Cardiac septum (tissue), 1 donor: ENCODE measurements at regions of chr1 and their contacts with region 1.

Region 1: DNA sequence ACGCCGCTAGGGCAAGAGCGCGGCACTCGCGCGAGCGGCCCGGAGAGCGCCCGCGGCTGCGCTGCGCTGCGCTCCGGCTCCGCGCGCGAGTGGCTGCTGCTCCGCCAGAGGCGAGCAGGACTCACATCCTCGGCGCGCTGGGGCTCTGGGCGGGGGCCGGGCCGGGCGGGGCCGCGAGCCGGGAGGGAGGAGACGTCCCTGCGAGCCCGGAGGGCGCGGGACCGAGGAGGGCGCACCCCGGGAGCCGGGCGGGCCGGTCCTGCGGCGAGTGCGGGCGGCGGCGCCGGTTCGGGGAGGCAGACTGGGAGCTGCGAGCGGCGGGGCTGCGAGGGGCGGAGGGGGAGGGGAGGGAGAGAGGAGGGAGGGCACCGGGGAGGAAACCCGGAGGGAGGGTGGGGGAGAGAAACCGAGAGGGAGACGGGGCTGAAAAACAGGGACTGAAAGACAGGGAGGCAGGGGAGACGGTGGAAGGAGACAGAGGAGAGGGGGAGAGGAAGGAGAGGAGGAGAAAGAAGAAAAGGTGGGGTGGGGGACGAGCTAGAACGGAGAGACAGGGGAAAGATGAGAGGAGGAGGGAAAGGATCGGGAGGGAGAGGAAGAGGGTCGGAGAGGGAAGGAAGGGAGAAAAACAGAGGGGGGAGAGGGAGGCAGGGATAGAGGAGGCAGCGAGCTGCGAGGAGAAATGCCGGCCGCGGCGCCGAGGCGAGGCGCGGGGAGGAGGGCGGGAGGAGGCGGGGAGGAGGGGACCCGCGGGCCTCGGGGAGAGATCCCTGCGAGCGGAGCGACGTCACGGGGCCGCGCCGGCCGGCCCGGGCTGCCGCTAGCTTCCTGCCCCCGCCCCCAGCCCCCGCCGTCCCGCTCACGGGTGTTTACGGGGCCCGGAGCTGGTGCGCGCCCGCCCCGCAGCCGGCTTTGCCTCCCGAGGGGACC is at the start of gene CAMK2N1:
- DNase-seq: peak; percentile 83
- total RNA-seq, gene CAMK2N1: 11.7 TPM

Region 2: DNA sequence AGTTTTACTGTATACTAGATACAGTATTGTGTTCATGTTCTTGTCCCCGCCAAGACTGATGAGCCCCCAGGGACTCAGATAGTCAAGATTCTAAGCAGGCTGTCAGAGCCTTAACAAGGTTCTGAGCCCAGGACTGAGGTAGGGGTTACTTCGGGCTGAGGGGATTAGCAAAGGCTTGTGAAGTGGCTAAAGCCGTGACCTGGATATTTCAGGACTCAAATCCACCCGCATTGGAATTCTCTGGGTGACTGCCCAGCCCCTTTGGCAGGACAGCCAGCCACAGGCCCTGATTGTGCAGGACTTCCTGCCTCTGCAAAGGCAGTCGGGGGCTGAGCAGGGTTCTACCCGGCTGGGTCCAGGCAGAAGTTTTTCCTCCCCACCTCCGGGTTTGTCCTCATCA is 415.9 kb before region 1 on chr1 and contains the start of gene PLA2G5:
- intact Hi-C with region 1: loop called (anchors 10 kb)
- DNase-seq: peak; percentile 87
- total RNA-seq, gene PLA2G5: 36.4 TPM

Region 3: DNA sequence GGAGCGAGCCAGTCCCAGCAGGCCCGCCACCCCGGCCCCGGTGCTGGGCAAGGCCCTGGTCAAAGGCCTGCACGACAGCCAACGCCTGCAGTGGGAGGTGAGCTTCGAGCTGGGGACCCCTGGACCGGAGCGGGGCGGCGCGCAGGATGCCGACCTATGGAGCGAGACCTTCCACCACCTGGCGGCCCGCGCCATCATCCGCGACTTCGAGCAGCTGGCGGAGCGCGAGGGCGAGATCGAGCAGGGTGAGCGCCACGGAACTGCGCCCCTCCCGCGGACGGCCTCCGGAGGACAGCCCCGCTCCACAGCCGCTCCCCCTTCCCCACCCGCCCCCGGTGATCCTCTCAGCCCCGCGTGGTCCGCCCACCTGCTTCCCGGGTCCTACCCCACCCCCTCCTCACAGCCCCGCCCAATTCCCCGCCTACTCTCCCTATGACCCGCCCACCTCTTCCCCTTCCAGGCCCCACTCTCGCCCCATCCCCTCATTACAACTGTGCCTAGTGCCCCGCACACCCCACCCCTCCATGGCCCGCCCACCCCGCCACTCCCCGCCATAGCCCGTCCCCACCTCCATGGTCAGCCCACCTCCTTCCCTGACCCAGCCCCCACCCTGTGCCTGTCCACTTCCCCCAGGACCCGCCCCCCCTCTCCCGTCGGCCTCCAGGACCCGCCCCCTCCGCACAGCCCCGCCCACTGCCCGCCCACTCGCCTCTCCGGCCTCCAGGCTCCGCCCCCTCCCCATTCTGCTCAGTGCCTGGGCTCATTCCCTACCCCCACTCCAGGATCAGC is 142.4 kb before region 1 on chr1:
- intact Hi-C with region 1: no loop called
- DNase-seq: no peak

Region 4: GRCh38 chr1:20448671-20449071 is 37.1 kb before region 1 on chr1:
- intact Hi-C with region 1: no loop called
- DNase-seq: no peak

Region 5: GRCh38 chr1:20551945-20552727 is 66.3 kb after region 1 on chr1 and contains the start of gene FAM43B:
- intact Hi-C with region 1: no loop called
- DNase-seq: peak; percentile 86
- total RNA-seq, gene FAM43B: 3.9 TPM